ENCODE measurements at regions of chr7 and their contacts with region 1.

Region 1: GRCh38 chr7:901381-902154 is 25.2 kb downstream of the GET4 start:
- DNase-seq: peak; percentile 64 to 86 (median 80)
- ATAC-seq: peak; percentile 44 to 81 (median 66)
- H3K4me3 ChIP-seq: no peak overlapping the region
- H3K27ac ChIP-seq: no peak overlapping the region
- H3K4me1 ChIP-seq: peaks cover 0 to 4% (median 0%) of the 10 kb centered on the region in 3 donors
- H3K27me3 ChIP-seq: no peaks in the 10 kb centered on the region
- CTCF ChIP-seq: no peak

Region 2: DNA sequence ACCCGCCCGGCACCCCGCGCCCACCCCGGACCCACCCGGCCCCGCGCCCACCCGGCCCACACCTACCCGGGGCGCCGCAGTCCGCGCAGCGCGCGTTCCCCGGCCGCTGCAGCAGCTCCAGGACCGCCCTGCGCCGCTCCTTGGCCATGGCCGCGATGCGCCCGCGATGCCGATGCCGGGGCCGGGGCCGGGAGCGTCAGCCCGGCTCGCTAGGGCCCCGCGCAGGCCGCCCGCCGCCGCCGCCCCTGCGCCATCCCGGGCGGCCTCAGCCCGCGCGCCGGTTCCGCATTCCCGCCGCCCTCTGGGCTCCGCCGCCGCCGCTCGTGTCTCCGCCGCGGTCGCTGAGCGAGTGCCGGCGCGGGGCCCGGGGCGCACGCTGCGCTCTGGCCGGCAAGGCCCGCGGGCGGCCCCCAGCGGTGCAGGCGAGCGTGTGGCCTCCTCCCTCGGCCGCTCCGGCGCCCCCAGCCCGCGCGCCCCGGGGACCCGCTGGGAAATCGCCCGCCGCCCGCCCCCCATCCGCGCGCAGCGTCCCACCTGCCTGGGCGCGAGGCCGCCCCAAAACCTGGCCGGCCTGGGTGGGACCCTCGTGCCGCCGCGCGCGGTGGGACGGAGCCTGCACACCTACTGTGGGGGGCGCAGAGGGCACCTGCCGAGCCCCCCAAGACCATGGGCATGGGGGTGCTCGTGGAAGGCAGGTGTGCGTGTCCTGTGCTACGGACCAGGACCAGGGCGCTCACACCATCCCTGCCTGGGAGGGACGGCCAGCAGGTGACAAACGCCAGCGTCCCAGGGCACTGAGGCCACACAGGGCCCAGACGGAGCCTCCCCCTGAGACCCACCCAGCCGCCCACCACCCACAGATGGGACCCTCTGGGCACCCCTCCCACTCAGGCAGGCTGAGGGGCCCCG is 53.0 kb after region 1 on chr7 and contains the start of gene ADAP1:
- intact Hi-C with region 1: loop called in 1 of 3 experiments (anchors 10 kb)
- DNase-seq: peak in 3 of 6 donors; percentile 47 to 83 (median 77)
- ATAC-seq: peak; percentile 29 to 75 (median 68)
- H3K4me3 ChIP-seq: peak within 1 kb of the TSS; percentile 21 to 66 (median 38)
- H3K27ac ChIP-seq: peak within 1 kb of the TSS in 2 of 4 donors; percentile 12 to 30
- H3K4me1 ChIP-seq: peaks cover 0 to 8% (median 0%) of the 10 kb centered on the region in 3 donors
- H3K27me3 ChIP-seq: no peaks in the 10 kb centered on the region
- CTCF ChIP-seq: no peak
- total RNA-seq, gene ADAP1: 10.9 to 15.0 (median 13.7) TPM

Region 3: GRCh38 chr7:1059200-1060091 is 157.9 kb after region 1 on chr7:
- intact Hi-C with region 1: loop called in 1 of 3 experiments (anchors 10 kb)
- DNase-seq: peak in 5 of 6 donors; percentile 61 to 76 (median 66)
- ATAC-seq: peak in 3 of 4 donors; percentile 57 to 83 (median 83)
- H3K4me3 ChIP-seq: peak overlapping the region in 1 of 4 donors; percentile 29
- H3K27ac ChIP-seq: no peak overlapping the region
- H3K4me1 ChIP-seq: peaks cover 0 to 9% (median 0%) of the 10 kb centered on the region in 3 donors
- H3K27me3 ChIP-seq: no peaks in the 10 kb centered on the region
- CTCF ChIP-seq: no peak

Region 4: GRCh38 chr7:1175967-1176851 is 274.6 kb after region 1 on chr7:
- intact Hi-C with region 1: no loop called
- DNase-seq: peak; percentile 68 to 98 (median 88)
- ATAC-seq: peak; percentile 89 to 97 (median 96)
- H3K4me3 ChIP-seq: peak overlapping the region in 3 of 4 donors; percentile 5 to 27 (median 26)
- H3K27ac ChIP-seq: peak overlapping the region in 1 of 4 donors; percentile 19
- H3K4me1 ChIP-seq: no peaks in the 10 kb centered on the region
- H3K27me3 ChIP-seq: peaks cover 0 to 2% (median 0%) of the 10 kb centered on the region in 4 donors
- CTCF ChIP-seq: peak; percentile 90 to 93 (median 92)

Measured in pancreas (tissue), 10 donors.